Sciatic nerve (tissue), 2 donors: ENCODE measurements at regions of chr6 and their contacts with region 1.

Region 1: DNA sequence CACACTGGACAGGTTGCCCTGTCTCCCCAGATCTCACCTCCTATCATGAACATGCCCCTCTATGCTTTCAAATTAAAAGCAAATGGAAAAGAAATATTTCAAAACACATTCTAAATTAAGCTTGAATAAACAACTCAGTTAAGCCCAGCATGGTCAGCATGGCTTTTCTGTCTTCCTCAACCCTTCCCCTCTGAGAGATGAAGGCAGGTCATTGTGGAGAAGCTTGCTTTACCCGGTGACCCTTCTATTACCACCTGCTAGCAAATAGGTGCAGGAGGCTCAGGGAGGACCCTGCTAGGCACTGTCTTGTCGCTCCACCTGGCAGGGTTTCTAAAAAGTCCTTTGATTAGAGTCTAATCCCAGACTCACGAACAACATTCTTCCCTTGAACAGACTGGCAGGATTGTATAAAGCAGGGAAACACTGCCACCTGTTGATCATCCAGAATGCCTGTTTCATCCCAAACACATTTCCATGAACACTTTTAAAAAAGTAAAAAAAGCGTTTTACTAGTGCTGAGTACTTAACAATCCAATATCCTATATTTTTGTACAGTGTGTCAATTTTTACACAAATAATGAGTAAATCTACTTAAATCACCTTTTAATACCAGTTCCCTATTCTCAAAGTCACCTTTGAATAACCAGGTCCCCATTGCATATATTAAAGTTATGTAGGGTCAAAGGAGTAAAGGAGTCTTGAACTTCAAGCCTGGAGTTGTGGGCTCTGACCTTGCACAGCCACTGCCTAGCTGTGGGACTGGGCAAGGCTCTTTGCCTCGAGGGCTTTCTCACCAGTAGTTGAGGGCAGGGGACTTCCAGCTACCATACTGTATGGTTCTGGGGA is 75.5 kb downstream of the GPR6 start:
- DNase-seq: no peak
- ATAC-seq: peak; percentile 76

Region 2: GRCh38 chr6:109705258-109705657 is 348.4 kb before region 1 on chr6:
- intact Hi-C with region 1: loop called (anchors 5 kb)
- DNase-seq: peak; percentile 89
- ATAC-seq: peak; percentile 94